HEK293T (cell line): ENCODE measurements at regions of chr11 and their contacts with region 1.

Region 1: GRCh38 chr11:83836883-83837654 is 550.9 kb upstream of the CCDC90B start:
- DNase-seq: peak; percentile 57

Region 2: GRCh38 chr11:83813296-83813695 is 23.8 kb before region 1 on chr11:
- CTCF ChIA-PET with region 1: no interaction called
- POLR2A ChIA-PET with region 1: no interaction called
- DNase-seq: no peak

Region 3: DNA sequence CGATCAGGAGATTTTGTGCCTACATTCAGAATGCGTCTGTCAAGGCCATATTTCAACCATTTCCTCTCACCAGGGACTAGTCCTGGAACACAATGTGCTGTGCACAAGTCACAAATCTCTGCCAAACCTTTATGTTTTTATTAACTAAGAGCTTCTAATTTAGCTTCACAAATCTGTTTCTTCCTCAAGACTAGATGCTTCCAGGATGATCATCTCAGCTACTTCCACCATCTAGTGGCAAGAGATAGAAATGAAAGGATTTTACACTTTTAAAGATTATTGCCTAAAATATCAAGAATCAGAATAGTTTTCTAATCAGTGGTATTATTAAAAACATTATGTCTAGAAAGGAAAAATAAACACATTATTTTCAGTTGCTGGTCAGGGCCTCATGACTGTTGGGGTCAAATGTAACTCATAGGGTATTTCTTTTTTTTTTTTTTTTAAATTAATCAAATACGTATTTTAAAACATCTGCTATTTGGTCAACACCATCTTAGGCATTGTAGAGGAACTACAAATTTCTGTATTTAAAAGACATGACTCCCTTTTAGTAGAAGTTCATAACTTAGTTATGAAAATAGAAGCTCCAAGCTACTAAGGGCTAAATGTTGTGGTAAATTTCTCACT is 687.5 kb after region 1 on chr11:
- CTCF ChIA-PET with region 1: interaction called, 11 read pairs
- POLR2A ChIA-PET with region 1: no interaction called
- DNase-seq: no peak